ENCODE measurements at regions of chr12 and their contacts with region 1.

Region 1: GRCh38 chr12:41190338-41190737 is 2.2 kb downstream of the PDZRN4 start:
- DNase-seq: no peak
- H3K4me3 ChIP-seq: peak overlapping the region; percentile 27 to 38
- H3K27ac ChIP-seq: peak overlapping the region; percentile 68 to 71
- H3K4me1 ChIP-seq: no peaks in the 10 kb centered on the region
- H3K27me3 ChIP-seq: no peaks in the 10 kb centered on the region
- CTCF ChIP-seq: peak in 2 of 4 experiments; percentile 15 to 28
- POLR2A ChIP-seq: no peak

Region 2: DNA sequence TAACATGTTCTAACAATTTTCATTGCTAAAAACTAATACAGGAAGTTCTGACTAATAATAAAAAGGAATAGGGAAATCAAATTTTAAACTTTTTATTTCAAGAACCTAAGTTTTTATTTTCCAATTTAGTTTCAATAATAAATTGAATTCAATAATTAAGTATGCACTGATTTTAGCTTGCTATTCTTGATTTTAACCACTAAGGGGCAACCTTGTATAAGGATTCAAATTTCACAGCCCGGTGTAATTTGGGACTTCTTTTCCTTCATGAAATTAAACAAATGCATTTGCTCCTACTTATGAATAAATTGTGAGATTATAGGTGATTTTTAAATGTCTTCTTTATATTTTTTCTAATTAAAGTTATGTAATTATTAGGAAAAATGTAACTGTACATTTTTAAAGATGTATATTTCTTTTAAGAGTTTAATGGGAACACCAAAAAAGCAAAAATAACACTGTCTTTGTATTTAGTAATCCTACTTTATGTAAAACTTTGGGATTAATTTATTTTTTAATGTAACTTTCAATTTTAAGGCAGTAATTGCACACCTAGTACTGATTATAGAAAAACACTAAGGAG is 243.6 kb before region 1 on chr12:
- intact Hi-C with region 1: loop called (anchors 5 kb)
- DNase-seq: no peak
- H3K4me3 ChIP-seq: no peak overlapping the region
- H3K27ac ChIP-seq: no peak overlapping the region
- H3K4me1 ChIP-seq: no peaks in the 10 kb centered on the region
- H3K27me3 ChIP-seq: no peaks in the 10 kb centered on the region
- CTCF ChIP-seq: peak in 3 of 4 experiments; percentile 60 to 74 (median 63)
- POLR2A ChIP-seq: no peak

Region 3: DNA sequence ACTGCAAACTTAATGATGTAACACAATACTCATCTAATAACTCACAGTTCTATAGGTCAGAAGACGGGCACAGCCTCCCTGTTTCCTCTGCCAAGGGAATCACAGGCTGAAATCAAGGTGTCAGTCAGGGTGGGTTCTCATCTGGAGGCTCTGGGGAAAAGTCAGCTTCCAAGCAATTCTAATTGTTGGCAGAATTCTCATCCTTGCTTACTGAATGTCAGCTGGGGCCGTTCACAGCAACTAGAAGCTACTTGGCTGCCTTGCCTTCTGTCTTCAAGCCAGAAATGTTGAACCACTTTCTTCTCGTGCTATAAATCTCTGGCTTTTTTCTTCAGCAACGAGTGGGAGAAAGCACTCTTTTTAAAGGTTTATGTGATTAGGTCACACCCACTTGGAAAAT is 82.3 kb before region 1 on chr12:
- intact Hi-C with region 1: loop called (anchors 5 kb)
- DNase-seq: no peak
- H3K4me3 ChIP-seq: no peak overlapping the region
- H3K27ac ChIP-seq: no peak overlapping the region
- H3K4me1 ChIP-seq: no peaks in the 10 kb centered on the region
- H3K27me3 ChIP-seq: no peaks in the 10 kb centered on the region
- CTCF ChIP-seq: no peak
- POLR2A ChIP-seq: no peak

Region 4: DNA sequence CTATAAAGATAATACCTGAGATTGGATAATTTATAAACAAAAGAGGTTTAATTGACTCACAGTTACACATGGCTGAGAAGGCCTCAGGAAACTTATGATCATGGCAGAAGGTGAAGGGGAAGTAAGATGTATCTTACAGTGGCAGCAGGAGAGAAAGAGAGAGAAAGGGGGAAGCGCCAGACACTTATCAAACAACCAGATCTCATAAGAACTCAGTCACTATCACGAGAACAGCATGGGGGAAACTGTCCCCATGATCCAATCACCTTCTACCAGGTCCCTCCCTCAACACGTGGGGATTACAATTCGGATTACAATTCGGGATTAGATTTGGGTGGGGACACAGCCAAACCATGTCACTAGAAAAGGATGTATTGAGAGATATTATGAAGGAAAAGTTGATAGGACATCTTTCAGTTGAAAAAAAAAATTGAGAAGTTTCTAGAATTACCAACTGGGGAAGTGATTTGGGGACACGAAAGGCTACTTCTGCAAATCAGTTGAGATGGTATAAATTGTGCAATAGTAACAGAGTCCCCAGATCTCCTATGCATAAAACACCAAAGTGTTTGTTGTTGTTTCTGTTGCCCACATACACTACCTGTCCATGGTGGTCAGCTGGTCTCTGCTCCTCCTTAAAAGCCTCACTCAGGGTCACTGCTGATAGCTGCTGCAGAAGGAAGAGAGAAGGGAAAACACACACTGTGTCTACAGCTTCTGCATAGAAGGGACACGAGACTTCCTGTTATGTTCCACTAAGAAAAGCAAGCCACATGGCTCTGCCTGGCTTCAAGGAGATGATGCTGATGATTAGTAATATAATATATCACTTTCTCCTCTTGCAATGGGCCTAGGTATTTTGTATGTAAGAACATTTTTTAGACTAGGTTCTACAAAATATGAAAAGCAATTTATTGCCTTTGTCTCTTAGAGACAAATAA is 463.3 kb after region 1 on chr12:
- intact Hi-C with region 1: loop called (anchors 10 kb)
- DNase-seq: no peak
- H3K4me3 ChIP-seq: no peak overlapping the region
- H3K27ac ChIP-seq: no peak overlapping the region
- H3K4me1 ChIP-seq: no peaks in the 10 kb centered on the region
- H3K27me3 ChIP-seq: no peaks in the 10 kb centered on the region
- CTCF ChIP-seq: no peak
- POLR2A ChIP-seq: no peak

Region 5: DNA sequence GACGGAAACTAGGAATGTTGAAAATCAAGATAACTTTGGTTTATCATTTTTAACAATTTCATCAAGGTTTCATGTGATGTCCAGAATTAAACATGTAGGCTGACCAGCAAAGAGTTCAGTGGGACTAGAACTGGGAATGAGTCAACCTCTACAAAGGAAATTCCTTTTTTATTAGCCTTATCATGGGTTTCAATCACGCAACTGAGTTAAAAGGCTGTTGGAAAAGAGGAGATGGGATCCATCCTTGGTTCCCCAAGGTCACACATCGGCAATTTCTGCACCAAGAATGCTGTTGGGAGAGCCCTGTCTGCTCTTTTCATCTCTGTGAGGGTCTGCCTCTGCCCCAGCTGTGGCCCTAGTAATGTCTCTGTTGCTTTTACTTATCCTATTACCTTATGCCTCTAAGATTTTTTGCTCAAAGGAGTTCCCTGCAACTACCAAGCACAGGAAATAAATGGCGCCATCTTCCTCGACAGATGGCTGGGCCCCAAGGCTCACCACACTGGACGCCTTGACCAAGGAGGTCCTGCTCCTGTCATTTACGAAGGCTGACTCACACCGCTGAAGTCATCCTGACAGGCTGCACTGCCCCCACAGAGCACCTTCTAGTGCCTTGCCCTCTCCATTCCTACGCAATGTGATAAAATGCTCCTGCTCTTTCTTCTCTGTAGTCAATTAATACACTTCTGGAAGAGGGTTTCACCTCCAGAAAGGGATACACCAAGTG is 586.9 kb after region 1 on chr12:
- intact Hi-C with region 1: no loop called
- DNase-seq: no peak
- H3K4me3 ChIP-seq: no peak overlapping the region
- H3K27ac ChIP-seq: no peak overlapping the region
- H3K4me1 ChIP-seq: no peaks in the 10 kb centered on the region
- H3K27me3 ChIP-seq: no peaks in the 10 kb centered on the region
- CTCF ChIP-seq: no peak
- POLR2A ChIP-seq: no peak